PC-9 (cell line): ENCODE measurements at regions of chr3 and their contacts with region 1.

Region 1: DNA sequence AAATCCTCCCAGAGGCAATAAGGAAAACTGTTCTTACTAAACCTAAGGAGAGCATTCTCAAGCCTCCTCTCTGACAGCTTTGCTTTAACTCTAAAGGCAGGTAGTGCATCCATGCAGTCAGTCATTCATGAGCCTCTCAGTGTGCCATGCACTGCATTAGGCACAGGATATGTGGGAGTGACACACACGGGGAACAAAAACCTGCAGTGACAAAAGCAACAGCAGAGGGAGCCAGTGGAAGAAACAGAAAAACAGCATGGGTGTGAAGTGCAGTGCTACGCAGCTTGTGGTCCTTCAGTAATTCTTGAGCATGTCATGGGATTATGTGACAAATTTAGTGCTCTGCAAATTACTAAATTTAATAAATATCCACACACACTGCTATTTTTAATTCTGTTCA is 230.7 kb downstream of the BBX start:
- DNase-seq: peak in 1 of 2 experiments; percentile 11
- H3K4me3 ChIP-seq: no peak overlapping the region
- H3K27ac ChIP-seq: no peak overlapping the region
- H3K4me1 ChIP-seq: no peaks in the 10 kb centered on the region
- H3K27me3 ChIP-seq: no peaks in the 10 kb centered on the region
- CTCF ChIP-seq: peak; percentile 67

Region 2: DNA sequence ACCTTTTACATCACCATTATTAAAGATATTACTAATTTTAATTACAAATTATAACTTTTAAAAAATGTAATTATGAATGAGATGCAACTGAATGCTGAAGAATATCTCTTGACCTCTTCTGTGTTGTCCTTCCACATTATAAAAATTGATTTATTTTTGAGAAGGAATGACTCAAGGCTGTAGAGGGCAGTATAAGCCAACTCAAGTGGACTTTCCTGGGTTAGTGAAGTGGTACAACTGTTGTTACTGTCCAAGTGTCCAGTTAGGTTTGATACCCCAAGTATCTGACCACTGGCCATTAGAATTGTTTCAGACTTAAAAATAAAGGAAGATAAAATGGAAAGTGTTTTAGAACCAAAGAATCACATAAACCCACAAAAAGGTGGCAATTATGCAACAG is 178.8 kb before region 1 on chr3:
- CTCF ChIA-PET with region 1: interaction called, 3 read pairs
- POLR2A ChIA-PET with region 1: no interaction called
- intact Hi-C with region 1: loop called (anchors 10 kb)
- DNase-seq: no peak
- H3K4me3 ChIP-seq: no peak overlapping the region
- H3K27ac ChIP-seq: no peak overlapping the region
- H3K4me1 ChIP-seq: no peaks in the 10 kb centered on the region
- H3K27me3 ChIP-seq: no peaks in the 10 kb centered on the region
- CTCF ChIP-seq: peak; percentile 81

Region 3: DNA sequence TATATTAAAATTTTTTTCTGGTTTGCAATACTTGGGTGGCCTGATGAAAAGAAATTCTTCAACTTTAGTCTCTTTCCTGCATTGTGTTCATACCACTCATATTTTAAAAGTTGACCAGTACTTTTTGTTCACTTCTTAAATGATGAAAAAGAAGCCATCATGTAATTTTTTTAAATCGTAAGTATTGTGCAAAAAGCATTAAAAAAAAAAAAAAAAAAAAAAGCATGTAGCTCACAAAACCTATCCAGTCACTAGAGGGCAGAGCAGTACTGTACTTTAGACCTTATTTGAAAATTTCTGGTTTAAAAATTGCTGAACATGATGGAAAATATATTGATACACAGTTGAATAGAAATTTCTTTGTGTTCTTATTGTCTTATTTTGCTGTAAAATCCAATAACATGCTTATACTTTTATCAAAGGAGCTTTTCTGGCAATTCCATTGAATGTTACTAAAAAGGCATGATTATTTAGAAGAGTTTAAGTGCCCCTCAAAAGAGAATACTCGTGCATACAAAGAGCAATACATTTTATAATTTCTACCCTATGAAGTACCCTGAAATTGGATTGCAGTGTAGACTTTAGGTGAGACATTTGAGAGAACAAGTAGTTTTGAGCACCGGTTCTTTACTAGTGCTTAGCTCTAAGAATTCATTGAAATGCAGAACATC is 93.0 kb before region 1 on chr3:
- CTCF ChIA-PET with region 1: interaction called, 10 read pairs
- POLR2A ChIA-PET with region 1: no interaction called
- intact Hi-C with region 1: no loop called
- DNase-seq: peak in 1 of 2 experiments; percentile 53
- H3K4me3 ChIP-seq: no peak overlapping the region
- H3K27ac ChIP-seq: no peak overlapping the region
- H3K4me1 ChIP-seq: no peaks in the 10 kb centered on the region
- H3K27me3 ChIP-seq: no peaks in the 10 kb centered on the region
- CTCF ChIP-seq: peak; percentile 92

Region 4: DNA sequence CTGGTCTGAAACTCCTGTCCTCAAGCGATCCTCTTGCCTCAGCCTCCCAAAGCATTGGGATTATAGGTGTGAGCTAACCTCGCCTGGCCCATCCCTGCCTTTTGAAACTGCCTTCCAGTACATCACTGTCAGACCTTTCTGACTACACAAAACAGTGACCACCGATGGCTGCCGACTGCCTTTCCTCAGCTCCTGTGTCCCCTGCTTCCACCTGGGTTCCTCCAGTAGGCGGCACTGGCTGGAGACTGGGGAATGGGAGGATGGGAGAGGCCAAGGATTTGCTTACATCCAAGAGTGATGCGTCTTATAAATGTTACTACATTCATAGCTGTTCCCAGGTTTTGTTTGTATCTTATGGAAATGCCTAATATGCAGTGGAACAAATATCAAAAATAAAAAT is 12.0 kb after region 1 on chr3:
- CTCF ChIA-PET with region 1: no interaction called
- POLR2A ChIA-PET with region 1: no interaction called
- intact Hi-C with region 1: no loop called
- DNase-seq: no peak
- H3K4me3 ChIP-seq: no peak overlapping the region
- H3K27ac ChIP-seq: no peak overlapping the region
- H3K4me1 ChIP-seq: no peaks in the 10 kb centered on the region
- H3K27me3 ChIP-seq: no peaks in the 10 kb centered on the region
- CTCF ChIP-seq: no peak